ENCODE measurements at regions of chr6 and their contacts with region 1.

Region 1: GRCh38 chr6:52144201-52145076 is 41.7 kb upstream of the IL17A start:
- DNase-seq: no peak
- ATAC-seq: no peak
- H3K4me3 ChIP-seq: no peak overlapping the region
- H3K27ac ChIP-seq: no peak overlapping the region
- H3K4me1 ChIP-seq: no peaks in the 10 kb centered on the region
- H3K27me3 ChIP-seq: peaks cover 0 to 24% of the 10 kb centered on the region in 2 experiments; a peak in 3 of 5 replicates
- CTCF ChIP-seq: no peak
- EP300 ChIP-seq: no peak
- POLR2A ChIP-seq: no peak
- RAD21 ChIP-seq: no peak

Region 2: DNA sequence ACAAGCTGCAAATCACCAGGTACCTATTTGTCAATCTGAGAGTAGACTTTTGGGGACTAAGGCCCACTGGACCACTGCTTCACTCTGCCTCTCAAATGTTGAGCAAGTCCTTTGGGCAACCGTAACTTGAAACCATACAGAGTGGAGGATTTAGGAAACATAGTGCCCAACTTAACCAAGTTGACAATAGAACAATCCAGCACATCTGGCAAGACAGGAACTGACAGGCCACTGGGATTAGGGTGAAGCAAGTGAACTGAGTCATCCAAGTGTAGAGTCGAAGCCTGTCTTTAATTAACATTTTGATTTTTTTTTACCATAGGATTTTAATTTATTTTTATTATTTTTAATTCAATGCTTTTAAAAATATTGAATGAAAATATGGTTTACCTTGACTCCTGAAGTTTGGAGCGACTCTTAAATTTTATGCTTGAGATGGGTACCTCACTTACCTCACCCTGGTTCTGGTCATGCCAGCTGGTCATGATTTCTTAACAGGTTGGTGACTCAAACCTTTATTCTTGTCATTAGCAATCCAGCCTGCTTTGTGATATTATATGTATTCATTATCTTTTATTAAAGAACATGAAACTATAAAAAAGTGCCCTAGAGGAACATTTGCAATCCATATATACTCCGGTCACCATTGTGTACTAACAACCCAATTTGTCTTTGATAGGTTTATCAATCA is 1782.7 kb before region 1 on chr6:
- CTCF ChIA-PET with region 1: no interaction called
- POLR2A ChIA-PET with region 1: no interaction called
- in situ Hi-C with region 1: no loop called
- intact Hi-C with region 1: loop called (anchors 5 kb)
- DNase-seq: no peak
- ATAC-seq: no peak
- H3K4me3 ChIP-seq: no peak overlapping the region
- H3K27ac ChIP-seq: no peak overlapping the region
- H3K4me1 ChIP-seq: no peaks in the 10 kb centered on the region
- H3K27me3 ChIP-seq: no peaks in the 10 kb centered on the region
- CTCF ChIP-seq: no peak
- EP300 ChIP-seq: no peak
- POLR2A ChIP-seq: no peak
- RAD21 ChIP-seq: no peak

Region 3: DNA sequence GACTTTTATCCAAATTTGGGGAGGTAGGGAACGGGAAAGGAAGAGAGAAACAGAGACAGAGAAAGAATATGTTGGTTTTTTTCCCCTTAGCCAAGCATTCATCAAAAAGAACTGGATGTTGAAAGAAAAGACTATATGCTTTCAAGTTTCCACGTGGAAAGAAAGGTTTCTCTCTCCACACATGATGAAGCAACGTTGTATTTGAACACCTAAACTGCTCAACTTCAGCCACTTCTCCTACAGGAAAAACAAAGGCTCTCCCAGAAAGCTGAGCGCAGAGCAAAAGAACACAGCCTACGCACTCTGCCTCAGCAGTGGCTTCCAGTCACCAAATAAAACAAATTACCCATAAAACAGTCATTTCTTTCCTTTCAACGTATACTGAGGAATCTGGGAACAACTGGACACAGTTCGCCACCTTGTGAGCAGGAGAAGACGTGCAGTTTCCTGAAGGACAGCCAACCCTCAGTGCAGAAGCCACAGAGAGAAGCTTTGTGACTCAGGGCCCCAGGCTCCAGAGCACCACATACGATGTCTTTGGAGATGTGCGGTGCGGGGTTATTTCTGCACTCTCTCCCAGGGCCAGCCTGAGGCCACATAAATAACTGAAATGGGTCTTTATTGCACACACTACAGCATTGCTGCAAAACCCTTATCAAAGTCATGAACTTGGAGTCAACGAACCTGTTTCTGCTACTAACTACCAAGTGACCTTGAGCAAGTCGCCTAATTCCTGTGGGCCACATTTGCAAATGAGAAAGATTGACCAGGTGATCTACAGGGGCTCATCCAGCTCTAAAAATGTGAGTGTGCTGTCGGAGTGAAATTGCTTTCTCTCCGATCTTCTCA is 89.8 kb after region 1 on chr6:
- CTCF ChIA-PET with region 1: no interaction called
- POLR2A ChIA-PET with region 1: no interaction called
- in situ Hi-C with region 1: no loop called
- intact Hi-C with region 1: no loop called
- DNase-seq: peak; percentile 68
- ATAC-seq: peak; percentile 99
- H3K4me3 ChIP-seq: no peak overlapping the region; a peak in 1 of 6 replicates
- H3K27ac ChIP-seq: no peak overlapping the region
- H3K4me1 ChIP-seq: peaks cover 10% of the 10 kb centered on the region
- H3K27me3 ChIP-seq: peaks cover 0 to 27% of the 10 kb centered on the region in 2 experiments; a peak in 2 of 5 replicates
- CTCF ChIP-seq: peak; percentile 86
- EP300 ChIP-seq: no peak
- POLR2A ChIP-seq: no peak
- RAD21 ChIP-seq: peak; percentile 70; the same call in 1 of the 2 replicates

Measured in HepG2 (cell line).